ENCODE measurements at regions of chr14 and their contacts with region 1.

Region 1: GRCh38 chr14:63276492-63277342 is 42.0 kb downstream of the GPHB5 start:
- DNase-seq: no peak
- ATAC-seq: peak; percentile 73 to 87 (median 80)
- H3K4me3 ChIP-seq: no peak overlapping the region
- H3K27ac ChIP-seq: no peak overlapping the region
- H3K4me1 ChIP-seq: no peaks in the 10 kb centered on the region
- H3K27me3 ChIP-seq: no peaks in the 10 kb centered on the region
- CTCF ChIP-seq: peak; percentile 77 to 84 (median 78)
- POLR2A ChIP-seq: no peak

Region 2: DNA sequence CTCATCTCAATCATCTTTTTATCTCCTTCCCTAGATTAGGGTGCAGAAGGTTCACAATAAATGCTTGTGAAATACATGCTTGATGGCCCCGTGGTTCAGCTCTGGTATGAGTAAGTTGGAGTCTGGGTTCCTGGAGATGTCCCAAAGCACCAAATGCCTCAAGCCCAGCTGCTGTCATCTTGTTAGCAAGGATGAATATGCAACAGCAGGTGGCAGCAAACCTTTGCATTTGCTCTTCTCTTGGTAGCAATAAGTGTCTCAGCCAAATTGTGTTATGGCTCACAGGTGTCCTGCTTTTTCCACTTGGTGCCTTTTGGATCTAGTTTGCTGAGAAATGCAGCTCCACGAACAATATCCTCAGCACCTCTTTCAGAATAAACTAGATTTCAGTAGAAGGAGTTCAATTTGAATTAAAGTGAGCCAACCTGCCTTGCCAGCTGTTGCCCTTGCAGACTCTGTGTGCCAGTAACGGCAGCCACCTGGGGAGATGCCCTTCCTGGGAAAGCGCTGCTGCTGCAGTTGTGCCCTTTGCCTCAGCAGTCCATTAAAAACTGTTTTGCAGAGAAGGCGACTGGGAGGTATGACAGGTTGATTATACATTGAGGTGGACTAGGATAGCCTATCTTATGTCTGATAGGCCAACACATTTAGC is 1097.2 kb before region 1 on chr14:
- intact Hi-C with region 1: loop called in 1 of 2 experiments (anchors 10 kb)
- DNase-seq: peak in 2 of 3 donors; percentile 32 to 65
- ATAC-seq: peak; percentile 82 to 94 (median 90)
- H3K4me3 ChIP-seq: no peak overlapping the region
- H3K27ac ChIP-seq: no peak overlapping the region
- H3K4me1 ChIP-seq: no peaks in the 10 kb centered on the region
- H3K27me3 ChIP-seq: no peaks in the 10 kb centered on the region
- CTCF ChIP-seq: peak; percentile 57 to 72 (median 62)
- POLR2A ChIP-seq: no peak

Region 3: GRCh38 chr14:63174760-63175211 is 101.9 kb before region 1 on chr14:
- intact Hi-C with region 1: loop called in 1 of 2 experiments (anchors 10 kb)
- DNase-seq: no peak
- ATAC-seq: peak; percentile 36 to 63 (median 44)
- H3K4me3 ChIP-seq: no peak overlapping the region
- H3K27ac ChIP-seq: no peak overlapping the region
- H3K4me1 ChIP-seq: no peaks in the 10 kb centered on the region
- H3K27me3 ChIP-seq: no peaks in the 10 kb centered on the region
- CTCF ChIP-seq: peak; percentile 28 to 50 (median 42)
- POLR2A ChIP-seq: no peak